CD4-positive, alpha-beta T cell (primary cell): ENCODE measurements at regions of chr2 and their contacts with region 1.

Region 1: DNA sequence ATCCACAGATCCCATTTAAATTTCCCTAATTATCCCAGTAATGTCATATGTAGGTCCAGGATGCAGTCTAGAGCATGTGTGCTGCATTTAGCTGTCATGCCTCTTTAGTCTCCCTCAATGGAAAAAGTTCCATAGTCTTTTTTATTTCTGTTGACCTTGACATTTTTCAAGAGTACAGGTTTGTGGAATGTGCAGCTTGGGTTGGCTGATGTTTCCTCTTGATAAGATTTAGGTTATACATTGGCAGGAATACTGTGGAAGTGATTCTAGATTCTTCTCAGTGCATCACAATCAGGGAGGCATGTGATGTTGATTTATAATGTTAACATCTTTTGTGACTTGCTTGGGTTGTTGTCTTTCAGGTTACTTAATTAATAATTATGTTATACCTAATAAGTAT is 42.5 kb downstream of the PPM1B start:
- DNase-seq: no peak
- ATAC-seq: no peak
- H3K4me3 ChIP-seq: no peak overlapping the region
- H3K4me3 Mint-ChIP-seq: no peak overlapping the region
- H3K27ac ChIP-seq: no peak overlapping the region
- H3K27ac Mint-ChIP-seq: no peak overlapping the region
- H3K4me1 ChIP-seq: no peaks in the 10 kb centered on the region
- H3K4me1 Mint-ChIP-seq: peaks cover 27% of the 10 kb centered on the region
- H3K27me3 ChIP-seq: no peaks in the 10 kb centered on the region
- H3K27me3 Mint-ChIP-seq: no peaks in the 10 kb centered on the region
- CTCF ChIP-seq: no peak

Region 2: GRCh38 chr2:44120428-44120827 is 90.8 kb before region 1 on chr2:
- CTCF ChIA-PET with region 1: no interaction called
- POLR2A ChIA-PET with region 1: no interaction called
- intact Hi-C with region 1: no loop called
- DNase-seq: peak in 5 of 14 experiments; percentile 8 to 77 (median 52)
- ATAC-seq: peak; percentile 86
- H3K4me3 ChIP-seq: no peak overlapping the region
- H3K4me3 Mint-ChIP-seq: no peak overlapping the region
- H3K27ac ChIP-seq: no peak overlapping the region
- H3K27ac Mint-ChIP-seq: no peak overlapping the region
- H3K4me1 ChIP-seq: peaks cover 8% of the 10 kb centered on the region
- H3K4me1 Mint-ChIP-seq: peaks cover 12% of the 10 kb centered on the region
- H3K27me3 ChIP-seq: no peaks in the 10 kb centered on the region
- H3K27me3 Mint-ChIP-seq: no peaks in the 10 kb centered on the region
- CTCF ChIP-seq: no peak

Region 3: GRCh38 chr2:44195714-44196113 is 15.5 kb before region 1 on chr2:
- CTCF ChIA-PET with region 1: no interaction called
- POLR2A ChIA-PET with region 1: no interaction called
- intact Hi-C with region 1: loop called in 1 of 2 experiments (anchors 2 kb)
- DNase-seq: no peak
- ATAC-seq: no peak
- H3K4me3 ChIP-seq: no peak overlapping the region
- H3K4me3 Mint-ChIP-seq: no peak overlapping the region
- H3K27ac ChIP-seq: no peak overlapping the region
- H3K27ac Mint-ChIP-seq: no peak overlapping the region
- H3K4me1 ChIP-seq: peaks cover 22% of the 10 kb centered on the region
- H3K4me1 Mint-ChIP-seq: peaks cover 77% of the 10 kb centered on the region
- H3K27me3 ChIP-seq: no peaks in the 10 kb centered on the region
- H3K27me3 Mint-ChIP-seq: no peaks in the 10 kb centered on the region
- CTCF ChIP-seq: no peak